K562 (cell line): ENCODE measurements at regions of chr2 and their contacts with region 1.

Region 1: DNA sequence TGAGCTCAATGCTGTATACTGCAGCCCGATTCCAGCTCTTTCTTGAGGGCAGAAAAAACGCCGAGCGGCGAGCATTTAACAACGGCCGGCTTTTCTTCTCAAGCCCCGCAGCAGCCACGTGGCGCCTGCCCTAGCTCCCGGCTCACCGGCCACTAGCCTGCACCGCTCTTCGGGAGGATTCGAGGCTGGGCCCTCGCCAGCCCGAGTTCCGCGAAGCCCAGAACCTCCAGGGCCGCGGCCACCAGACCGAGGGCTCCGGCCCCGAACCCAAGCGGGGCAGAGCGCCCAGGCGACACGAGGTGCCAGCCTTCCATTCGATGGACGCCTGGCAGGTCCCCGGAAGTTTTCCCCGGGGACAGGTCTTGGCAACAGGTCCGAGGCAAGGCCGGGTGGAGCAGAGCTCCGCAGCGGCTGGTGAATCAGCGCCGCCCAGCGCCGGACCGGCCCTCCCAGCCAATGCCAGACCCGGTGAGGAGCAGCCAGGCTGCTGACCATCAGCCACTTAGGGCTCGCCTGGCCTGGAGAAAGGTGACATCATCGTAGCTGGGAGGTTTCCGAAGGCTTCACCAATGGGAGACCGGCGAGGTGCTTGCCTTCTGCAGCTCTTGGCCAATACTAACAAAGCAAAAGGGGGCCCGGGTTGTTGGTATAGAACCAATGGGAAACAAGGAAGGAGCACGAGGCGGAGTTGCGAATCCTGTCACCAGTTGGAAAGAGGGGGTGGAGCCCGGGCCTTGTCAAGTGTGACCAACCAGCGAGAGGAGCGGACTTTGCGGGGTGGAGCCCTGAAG is 544 bp upstream of the MXD1 start:
- DNase-seq: peak; percentile 95 to 100 (median 97)
- ATAC-seq: peak; percentile 89
- H3K4me3 ChIP-seq: peak overlapping the region; percentile 96
- H3K27ac ChIP-seq: peak overlapping the region; percentile 96
- H3K4me1 ChIP-seq: peaks cover 15 to 21% of the 10 kb centered on the region in 2 experiments
- H3K27me3 ChIP-seq: no peaks in the 10 kb centered on the region
- CTCF ChIP-seq: peak; percentile 61 to 65 (median 62)
- EP300 ChIP-seq: peak; percentile 23
- POLR2A ChIP-seq: peak; percentile 87
- RAD21 ChIP-seq: peak; percentile 46 to 71

Region 2: GRCh38 chr2:69724540-69725159 is 189.7 kb before region 1 on chr2:
- CTCF ChIA-PET with region 1: interaction called, 3 read pairs
- POLR2A ChIA-PET with region 1: interaction called, 8 read pairs
- in situ Hi-C with region 1: loop called (anchors 5 kb)
- intact Hi-C with region 1: loop called (anchors 2 kb)
- DNase-seq: peak; percentile 68 to 91 (median 73)
- ATAC-seq: peak; percentile 98
- H3K4me3 ChIP-seq: no peak overlapping the region
- H3K27ac ChIP-seq: no peak overlapping the region
- H3K4me1 ChIP-seq: peaks cover 6 to 7% of the 10 kb centered on the region in 2 experiments; a peak in 3 of 5 replicates
- H3K27me3 ChIP-seq: no peaks in the 10 kb centered on the region; a peak in 1 of 5 replicates
- CTCF ChIP-seq: peak; percentile 84 to 93 (median 93)
- EP300 ChIP-seq: peak; percentile 60
- POLR2A ChIP-seq: no peak
- RAD21 ChIP-seq: peak; percentile 97 to 99

Region 3: GRCh38 chr2:69762513-69763497 is 151.6 kb before region 1 on chr2:
- CTCF ChIA-PET with region 1: no interaction called
- POLR2A ChIA-PET with region 1: no interaction called
- in situ Hi-C with region 1: no loop called
- intact Hi-C with region 1: no loop called
- DNase-seq: no peak
- ATAC-seq: no peak; the same call in 2 of the 3 replicates
- H3K4me3 ChIP-seq: no peak overlapping the region
- H3K27ac ChIP-seq: no peak overlapping the region
- H3K4me1 ChIP-seq: peaks cover 0 to 7% of the 10 kb centered on the region in 2 experiments; a peak in 3 of 5 replicates
- H3K27me3 ChIP-seq: no peaks in the 10 kb centered on the region
- CTCF ChIP-seq: no peak
- EP300 ChIP-seq: no peak
- POLR2A ChIP-seq: no peak
- RAD21 ChIP-seq: no peak

Region 4: DNA sequence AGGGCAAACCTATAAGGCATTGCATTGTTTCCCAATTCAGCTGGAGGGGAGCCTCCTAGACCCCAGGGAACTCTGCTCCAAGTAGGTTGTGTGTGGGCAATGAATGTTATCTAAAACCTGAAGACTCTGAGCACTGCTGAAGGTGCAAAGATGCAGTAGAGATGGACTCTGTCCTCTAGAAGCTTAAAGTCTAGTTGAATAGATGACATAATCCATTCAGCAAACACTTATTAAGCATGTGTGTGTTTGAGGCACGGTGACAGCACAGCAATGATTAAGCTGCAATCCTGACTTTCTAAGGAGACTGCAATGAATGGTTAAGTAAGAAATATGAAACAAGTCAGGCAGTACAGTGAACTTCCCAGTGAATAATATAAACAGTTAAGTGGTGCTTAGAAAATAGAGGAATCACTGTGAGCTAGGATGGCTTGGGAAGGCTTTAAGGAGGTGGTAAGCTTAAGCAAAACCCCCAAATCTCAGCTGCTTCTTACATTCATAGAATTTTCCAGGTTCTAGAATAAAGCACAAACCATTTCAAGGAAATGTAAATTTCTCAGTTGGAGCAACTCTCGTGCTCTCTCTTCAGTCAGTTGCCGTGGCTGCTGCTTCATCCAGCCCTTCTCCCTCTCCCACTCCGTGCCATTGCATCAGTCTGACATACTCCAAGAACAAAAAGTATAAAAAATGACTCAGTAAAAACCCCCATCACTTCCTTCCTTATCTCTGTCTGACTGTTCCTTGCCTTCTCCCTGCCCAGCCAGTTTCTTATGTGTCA is 19.7 kb after region 1 on chr2:
- CTCF ChIA-PET with region 1: no interaction called
- POLR2A ChIA-PET with region 1: interaction called, 107 read pairs
- in situ Hi-C with region 1: no loop called
- intact Hi-C with region 1: no loop called
- DNase-seq: peak; percentile 35 to 75 (median 60)
- ATAC-seq: peak; percentile 87
- H3K4me3 ChIP-seq: no peak overlapping the region
- H3K27ac ChIP-seq: peak overlapping the region; percentile 71
- H3K4me1 ChIP-seq: peaks cover 4 to 26% of the 10 kb centered on the region in 2 experiments; a peak in 3 of 5 replicates
- H3K27me3 ChIP-seq: no peaks in the 10 kb centered on the region
- CTCF ChIP-seq: no peak
- EP300 ChIP-seq: peak; percentile 78
- POLR2A ChIP-seq: no peak
- RAD21 ChIP-seq: peak; percentile 27 to 29; a peak in 3 of 4 replicates

Region 5: DNA sequence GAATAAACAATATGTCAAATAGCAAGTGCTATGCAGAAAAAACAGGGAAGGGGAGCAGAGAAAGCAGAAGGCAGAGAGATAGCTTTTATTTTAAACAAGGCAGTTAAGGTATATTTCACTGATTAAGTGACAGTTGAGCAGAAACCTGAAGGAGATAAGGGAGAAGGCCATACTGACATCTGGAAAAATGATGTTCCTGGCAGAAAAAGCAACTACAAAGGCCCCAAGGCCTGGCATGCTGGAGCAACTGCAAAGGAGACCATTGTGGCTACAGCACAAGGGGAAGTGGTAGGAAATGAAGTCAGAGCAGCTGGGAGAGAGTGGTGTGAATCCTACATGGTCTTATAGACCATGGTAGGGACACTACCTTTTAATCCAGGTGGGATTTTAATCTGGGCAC is 164.0 kb after region 1 on chr2:
- CTCF ChIA-PET with region 1: no interaction called
- POLR2A ChIA-PET with region 1: interaction called, 80 read pairs
- in situ Hi-C with region 1: no loop called
- intact Hi-C with region 1: no loop called
- DNase-seq: peak in 3 of 4 experiments; percentile 15 to 69 (median 41)
- ATAC-seq: peak; percentile 73
- H3K4me3 ChIP-seq: no peak overlapping the region
- H3K27ac ChIP-seq: peak overlapping the region; percentile 70
- H3K4me1 ChIP-seq: peaks cover 16 to 24% of the 10 kb centered on the region in 2 experiments; a peak in 4 of 5 replicates
- H3K27me3 ChIP-seq: no peaks in the 10 kb centered on the region
- CTCF ChIP-seq: no peak
- EP300 ChIP-seq: peak; percentile 89; the same call in 1 of the 2 replicates
- POLR2A ChIP-seq: no peak
- RAD21 ChIP-seq: peak in 1 of 2 experiments; percentile 23; a peak in 1 of 4 replicates

Region 6: DNA sequence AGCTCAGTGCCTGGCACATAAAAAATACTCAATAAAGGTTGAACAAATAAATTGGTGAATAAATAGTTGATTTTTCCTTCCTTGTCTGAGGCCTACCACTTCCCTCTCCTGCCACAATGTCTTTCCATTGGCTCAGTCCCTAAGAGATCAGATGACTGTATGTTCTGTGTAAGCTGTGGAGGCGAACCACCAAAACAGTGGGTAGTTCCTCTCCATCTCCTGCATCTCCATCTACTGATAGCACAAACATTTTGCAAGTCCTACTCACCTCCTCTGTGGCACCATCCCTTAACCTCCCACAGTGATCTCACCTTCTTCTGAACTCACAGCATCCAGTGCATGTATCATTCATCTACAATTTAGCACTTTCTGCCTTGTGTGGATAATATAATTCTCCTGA is 223.2 kb after region 1 on chr2:
- CTCF ChIA-PET with region 1: interaction called, 30 read pairs
- POLR2A ChIA-PET with region 1: interaction called, 31 read pairs
- in situ Hi-C with region 1: no loop called
- intact Hi-C with region 1: loop called (anchors 1 kb)
- DNase-seq: peak in 1 of 4 experiments; percentile 65
- ATAC-seq: no peak
- H3K4me3 ChIP-seq: no peak overlapping the region
- H3K27ac ChIP-seq: peak overlapping the region; percentile 95
- H3K4me1 ChIP-seq: peaks cover 62 to 78% of the 10 kb centered on the region in 2 experiments
- H3K27me3 ChIP-seq: no peaks in the 10 kb centered on the region
- CTCF ChIP-seq: no peak
- EP300 ChIP-seq: no peak
- POLR2A ChIP-seq: no peak
- RAD21 ChIP-seq: peak in 1 of 2 experiments; percentile 36; a peak in 2 of 4 replicates

Region 7: DNA sequence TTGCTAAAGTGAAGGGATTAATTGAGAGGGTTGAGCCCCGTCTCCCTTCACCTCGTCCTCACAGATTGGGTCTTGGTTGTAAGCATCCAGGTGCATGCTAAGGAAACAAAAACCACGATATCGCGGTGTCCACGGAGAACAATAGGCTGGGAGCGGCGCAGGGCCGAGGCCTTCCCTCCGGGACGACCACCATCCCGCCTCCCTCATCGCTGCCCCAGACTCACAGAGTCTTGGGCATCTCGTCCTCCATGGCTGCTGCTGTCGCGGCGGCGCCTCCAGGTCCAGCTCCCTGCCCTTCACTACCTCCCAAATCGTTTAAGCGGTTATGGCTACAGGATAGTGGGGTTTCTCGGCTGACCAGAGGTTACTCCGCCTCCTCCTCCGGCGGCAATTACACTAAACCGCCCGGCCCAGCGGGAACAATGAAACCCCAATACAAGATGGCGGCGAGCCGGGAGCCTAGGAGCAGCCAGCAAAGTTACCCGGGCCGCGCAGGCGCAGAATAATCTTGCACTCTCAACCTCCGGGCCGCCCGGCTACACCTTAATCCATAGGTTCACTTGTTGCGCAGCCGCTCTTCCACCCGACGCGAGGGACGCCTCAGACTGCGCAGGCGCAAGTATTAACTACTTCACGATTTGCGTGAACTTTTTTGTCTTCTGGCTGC is 333.9 kb after region 1 on chr2 and contains the start of gene TIA1:
- CTCF ChIA-PET with region 1: no interaction called
- POLR2A ChIA-PET with region 1: interaction called, 10 read pairs
- in situ Hi-C with region 1: no loop called
- intact Hi-C with region 1: no loop called
- DNase-seq: peak; percentile 97 to 99 (median 98)
- ATAC-seq: peak; percentile 90
- H3K4me3 ChIP-seq: peak within 1 kb of the TSS; percentile 78
- H3K27ac ChIP-seq: peak within 1 kb of the TSS; percentile 97
- H3K4me1 ChIP-seq: peaks cover 16 to 28% of the 10 kb centered on the region in 2 experiments; a peak in 4 of 5 replicates
- H3K27me3 ChIP-seq: no peaks in the 10 kb centered on the region
- CTCF ChIP-seq: no peak
- EP300 ChIP-seq: 0 out of 2 replicates have a peak, but pooled peaks have one; percentile 20
- POLR2A ChIP-seq: peak; percentile 97
- RAD21 ChIP-seq: no peak
- polyA plus RNA-seq, gene TIA1: 25.3 to 32.3 TPM